ENCODE measurements at regions of chr1 and their contacts with region 1.

Region 1: GRCh38 chr1:113072757-113073478 is at the start of gene LRIG2:
- DNase-seq: peak; percentile 99
- ATAC-seq: peak; percentile 97
- H3K4me3 Mint-ChIP-seq: peak within 1 kb of the TSS; percentile 85
- H3K27ac Mint-ChIP-seq: peak within 1 kb of the TSS; percentile 94
- H3K4me1 Mint-ChIP-seq: peaks cover 27% of the 10 kb centered on the region
- H3K27me3 Mint-ChIP-seq: no peaks in the 10 kb centered on the region
- CTCF ChIP-seq: peak; percentile 95
- total RNA-seq, gene LRIG2: 7.2 to 8.3 TPM

Region 2: DNA sequence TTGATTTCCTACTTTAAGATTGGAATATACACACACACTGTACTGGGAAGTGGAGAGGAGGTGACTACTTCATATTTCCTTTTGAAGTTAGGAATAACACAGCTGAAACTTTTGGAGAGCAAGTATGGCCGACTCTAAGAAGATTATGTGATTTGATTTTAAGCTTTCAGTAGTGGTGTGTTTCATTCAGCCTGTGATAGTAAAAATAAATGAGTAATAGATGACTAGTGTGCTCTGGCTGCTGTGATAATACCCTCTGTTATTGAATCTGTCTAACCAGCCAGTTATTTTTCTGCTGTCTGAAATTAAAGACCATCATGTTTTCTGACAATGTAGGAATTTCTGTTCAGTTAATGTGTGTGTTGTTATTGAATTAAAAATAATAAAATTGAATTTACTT is 628.6 kb before region 1 on chr1:
- CTCF ChIA-PET with region 1: no interaction called
- POLR2A ChIA-PET with region 1: no interaction called
- intact Hi-C with region 1: no loop called
- DNase-seq: no peak
- ATAC-seq: no peak
- H3K4me3 Mint-ChIP-seq: no peak overlapping the region
- H3K27ac Mint-ChIP-seq: no peak overlapping the region
- H3K4me1 Mint-ChIP-seq: no peaks in the 10 kb centered on the region
- H3K27me3 Mint-ChIP-seq: no peaks in the 10 kb centered on the region
- CTCF ChIP-seq: no peak

Region 3: DNA sequence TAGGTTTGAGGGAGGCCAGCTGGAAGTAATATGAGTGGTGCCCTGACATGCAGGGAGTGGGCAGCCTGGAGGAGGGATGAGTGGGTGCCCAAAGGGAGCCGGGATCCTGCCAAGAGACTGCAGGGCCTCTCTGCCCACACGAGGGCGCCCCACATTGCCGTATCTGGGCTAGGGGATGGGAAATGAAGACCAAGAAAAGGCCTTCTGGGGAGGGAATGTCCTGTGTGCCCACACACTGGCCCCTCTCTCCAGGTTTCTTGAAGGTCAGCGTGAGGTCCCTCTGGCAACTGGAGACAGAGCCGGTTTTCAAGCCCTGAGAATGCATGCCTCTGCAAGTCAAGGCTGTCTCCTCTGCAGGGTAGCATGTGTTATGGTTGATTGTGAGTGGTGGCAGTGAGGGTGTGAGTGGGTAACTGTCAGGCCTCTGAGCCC is 263.6 kb before region 1 on chr1:
- CTCF ChIA-PET with region 1: interaction called, 12 read pairs
- POLR2A ChIA-PET with region 1: no interaction called
- intact Hi-C with region 1: no loop called
- DNase-seq: peak; percentile 81
- ATAC-seq: peak; percentile 91
- H3K4me3 Mint-ChIP-seq: no peak overlapping the region
- H3K27ac Mint-ChIP-seq: no peak overlapping the region
- H3K4me1 Mint-ChIP-seq: no peaks in the 10 kb centered on the region
- H3K27me3 Mint-ChIP-seq: peaks cover 5% of the 10 kb centered on the region
- CTCF ChIP-seq: peak; percentile 83

Region 4: DNA sequence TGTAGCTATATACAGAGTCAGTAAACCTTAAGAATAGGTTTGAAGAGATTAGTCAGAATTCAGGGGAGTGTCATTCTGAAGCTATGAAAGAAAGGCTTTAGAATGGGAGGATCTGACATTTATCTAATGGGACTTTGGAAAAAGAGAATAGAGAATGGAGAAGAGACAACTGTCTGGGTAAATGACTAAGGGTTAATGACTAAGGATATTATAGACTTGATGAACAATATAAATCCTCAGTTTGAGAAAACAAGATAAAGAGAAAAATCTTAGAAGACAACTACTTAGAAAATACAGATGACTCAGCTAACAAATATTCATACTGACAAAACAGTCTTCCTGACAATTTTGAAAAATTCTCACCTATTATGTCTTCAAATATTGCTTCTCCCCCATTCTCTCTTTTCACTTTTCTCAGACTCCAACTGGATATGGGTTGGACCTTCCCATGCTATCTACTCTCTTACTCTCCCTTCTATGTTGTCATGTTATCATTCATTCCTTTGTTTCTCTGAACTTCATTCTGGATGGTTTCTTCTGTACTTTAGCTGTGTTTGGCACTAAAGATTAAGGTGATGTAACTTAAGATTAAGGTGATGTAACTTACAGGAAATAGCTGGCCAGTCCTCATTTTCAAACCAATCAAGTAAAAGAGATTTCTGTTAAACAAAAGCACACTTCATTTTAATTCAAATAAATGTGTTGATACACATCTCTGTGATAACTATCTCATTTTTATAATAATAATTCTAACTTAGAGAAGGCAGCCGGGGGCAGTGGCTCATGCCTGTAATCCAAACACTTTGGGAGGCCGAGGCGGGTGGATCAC is 137.2 kb before region 1 on chr1:
- CTCF ChIA-PET with region 1: interaction called, 11 read pairs
- POLR2A ChIA-PET with region 1: no interaction called
- intact Hi-C with region 1: no loop called
- DNase-seq: no peak
- ATAC-seq: peak; percentile 61
- H3K4me3 Mint-ChIP-seq: peak overlapping the region; percentile 9
- H3K27ac Mint-ChIP-seq: peak overlapping the region; percentile 77
- H3K4me1 Mint-ChIP-seq: peaks cover 35% of the 10 kb centered on the region
- H3K27me3 Mint-ChIP-seq: no peaks in the 10 kb centered on the region
- CTCF ChIP-seq: no peak

Region 5: DNA sequence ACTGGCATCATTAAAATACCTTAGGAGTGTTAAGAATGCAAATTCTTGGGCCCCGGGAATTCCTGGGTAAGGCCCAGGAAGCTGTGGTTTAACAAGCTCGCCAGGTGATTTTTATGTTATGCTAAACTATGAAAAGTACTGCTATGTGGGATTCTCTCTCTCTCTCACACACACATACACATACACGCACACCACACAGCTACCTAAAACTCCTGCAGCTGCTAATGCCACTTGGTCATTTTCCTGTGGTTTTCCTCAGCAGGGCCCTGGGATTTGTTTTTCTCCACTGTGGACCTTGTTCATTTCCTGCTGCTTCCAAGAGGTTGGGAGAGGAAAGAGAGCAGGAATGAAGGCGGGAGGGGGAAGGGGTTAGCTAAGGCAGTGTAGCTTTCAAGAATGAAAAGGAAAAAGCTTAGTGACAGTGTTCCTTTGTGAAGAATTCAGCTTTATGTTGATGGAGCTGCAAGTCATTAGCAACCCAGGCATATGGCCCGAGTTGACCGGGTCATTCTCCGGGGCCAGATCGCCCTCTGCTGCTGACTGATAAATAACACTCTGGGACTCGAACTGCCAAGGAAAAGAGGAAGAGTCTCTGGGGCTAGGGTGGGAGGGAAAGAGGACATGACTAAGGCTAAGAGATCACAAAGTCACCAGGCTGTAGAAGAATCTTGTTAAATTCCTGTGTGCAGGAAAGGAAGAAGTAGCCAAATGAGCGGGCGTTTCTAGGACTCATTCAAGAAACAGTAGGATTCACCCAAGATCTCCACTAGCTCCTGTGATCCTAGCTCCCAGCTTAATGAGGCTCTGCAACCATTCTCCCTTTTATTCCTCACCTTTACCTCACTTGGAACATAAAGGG is 30.4 kb before region 1 on chr1:
- CTCF ChIA-PET with region 1: interaction called, 17 read pairs
- POLR2A ChIA-PET with region 1: no interaction called
- intact Hi-C with region 1: no loop called
- DNase-seq: peak; percentile 50
- ATAC-seq: peak; percentile 54
- H3K4me3 Mint-ChIP-seq: no peak overlapping the region
- H3K27ac Mint-ChIP-seq: no peak overlapping the region
- H3K4me1 Mint-ChIP-seq: peaks cover 37% of the 10 kb centered on the region
- H3K27me3 Mint-ChIP-seq: peaks cover 2% of the 10 kb centered on the region
- CTCF ChIP-seq: peak; percentile 42

Region 6: DNA sequence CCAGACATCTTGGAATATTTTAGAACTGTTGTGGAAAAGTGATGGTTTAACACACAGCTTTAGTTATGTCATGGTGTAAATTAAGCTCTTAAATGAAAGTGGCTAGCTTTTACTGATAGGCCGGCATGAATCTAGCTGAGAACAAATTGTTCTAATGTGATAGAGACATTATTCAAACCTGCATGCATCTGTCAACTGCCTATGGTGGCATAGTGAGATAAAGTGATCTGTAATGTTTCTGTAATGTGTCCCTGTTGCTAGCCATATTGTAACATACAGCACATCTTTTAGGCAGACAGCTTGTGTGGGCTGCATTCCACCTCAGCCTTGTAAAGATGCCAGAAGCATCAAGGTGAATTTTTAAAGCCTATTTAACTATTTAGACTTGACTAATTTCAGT is 16.1 kb after region 1 on chr1:
- CTCF ChIA-PET with region 1: interaction called, 13 read pairs
- POLR2A ChIA-PET with region 1: interaction called, 3 read pairs
- intact Hi-C with region 1: no loop called
- DNase-seq: no peak
- ATAC-seq: no peak
- H3K4me3 Mint-ChIP-seq: no peak overlapping the region
- H3K27ac Mint-ChIP-seq: no peak overlapping the region
- H3K4me1 Mint-ChIP-seq: peaks cover 34% of the 10 kb centered on the region
- H3K27me3 Mint-ChIP-seq: no peaks in the 10 kb centered on the region
- CTCF ChIP-seq: no peak

Region 7: GRCh38 chr1:113101588-113101987 is 28.7 kb after region 1 on chr1:
- CTCF ChIA-PET with region 1: interaction called, 12 read pairs
- POLR2A ChIA-PET with region 1: interaction called, 3 read pairs
- intact Hi-C with region 1: no loop called
- DNase-seq: no peak
- ATAC-seq: no peak
- H3K4me3 Mint-ChIP-seq: no peak overlapping the region
- H3K27ac Mint-ChIP-seq: peak overlapping the region; percentile 12
- H3K4me1 Mint-ChIP-seq: no peaks in the 10 kb centered on the region
- H3K27me3 Mint-ChIP-seq: no peaks in the 10 kb centered on the region
- CTCF ChIP-seq: no peak